ENCODE measurements at regions of chr4 and their contacts with region 1.

Region 1: DNA sequence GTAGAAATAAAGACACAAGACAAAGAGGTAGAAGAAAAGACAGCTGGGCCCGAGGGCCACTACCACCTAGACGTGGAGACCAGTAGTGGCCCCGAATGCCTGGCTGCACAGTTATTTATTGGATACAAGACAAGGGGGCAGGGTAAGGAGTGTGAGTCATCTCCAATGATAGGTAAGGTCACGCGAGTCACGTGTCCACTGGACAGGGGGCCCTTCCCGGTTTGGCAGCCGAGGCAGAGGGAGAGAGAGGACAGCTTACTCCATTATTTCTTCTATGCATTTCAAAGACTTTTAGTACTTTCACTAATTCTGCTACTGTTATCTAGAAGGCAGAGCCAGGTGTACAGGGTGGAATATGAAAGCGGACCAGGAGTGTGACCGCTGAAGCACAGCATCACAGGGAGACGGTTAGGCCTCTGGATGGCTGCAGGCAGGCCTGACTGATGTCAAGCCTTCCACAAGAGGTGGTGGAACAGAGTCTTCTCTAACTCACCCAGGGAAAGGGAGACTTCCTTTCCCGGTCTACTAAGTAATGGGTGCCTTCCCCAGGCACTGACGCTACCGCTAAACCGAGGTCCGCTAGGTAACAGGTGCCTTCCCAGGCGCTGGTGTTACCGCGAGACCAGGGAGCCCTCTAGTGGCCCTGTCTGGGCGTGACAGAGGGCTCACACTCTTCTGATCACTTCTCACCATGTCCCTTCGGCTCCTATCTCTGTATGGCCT is 44.9 kb downstream of the ZBTB49 start:
- DNase-seq: peak; percentile 30
- ATAC-seq: peak; percentile 79
- H3K4me3 ChIP-seq: no peak overlapping the region
- H3K27ac ChIP-seq: no peak overlapping the region
- H3K4me1 ChIP-seq: no peaks in the 10 kb centered on the region
- H3K27me3 ChIP-seq: peaks cover 15% of the 10 kb centered on the region
- CTCF ChIP-seq: peak; percentile 73
- POLR2A ChIP-seq: no peak
- RAD21 ChIP-seq: peak; percentile 75

Region 2: DNA sequence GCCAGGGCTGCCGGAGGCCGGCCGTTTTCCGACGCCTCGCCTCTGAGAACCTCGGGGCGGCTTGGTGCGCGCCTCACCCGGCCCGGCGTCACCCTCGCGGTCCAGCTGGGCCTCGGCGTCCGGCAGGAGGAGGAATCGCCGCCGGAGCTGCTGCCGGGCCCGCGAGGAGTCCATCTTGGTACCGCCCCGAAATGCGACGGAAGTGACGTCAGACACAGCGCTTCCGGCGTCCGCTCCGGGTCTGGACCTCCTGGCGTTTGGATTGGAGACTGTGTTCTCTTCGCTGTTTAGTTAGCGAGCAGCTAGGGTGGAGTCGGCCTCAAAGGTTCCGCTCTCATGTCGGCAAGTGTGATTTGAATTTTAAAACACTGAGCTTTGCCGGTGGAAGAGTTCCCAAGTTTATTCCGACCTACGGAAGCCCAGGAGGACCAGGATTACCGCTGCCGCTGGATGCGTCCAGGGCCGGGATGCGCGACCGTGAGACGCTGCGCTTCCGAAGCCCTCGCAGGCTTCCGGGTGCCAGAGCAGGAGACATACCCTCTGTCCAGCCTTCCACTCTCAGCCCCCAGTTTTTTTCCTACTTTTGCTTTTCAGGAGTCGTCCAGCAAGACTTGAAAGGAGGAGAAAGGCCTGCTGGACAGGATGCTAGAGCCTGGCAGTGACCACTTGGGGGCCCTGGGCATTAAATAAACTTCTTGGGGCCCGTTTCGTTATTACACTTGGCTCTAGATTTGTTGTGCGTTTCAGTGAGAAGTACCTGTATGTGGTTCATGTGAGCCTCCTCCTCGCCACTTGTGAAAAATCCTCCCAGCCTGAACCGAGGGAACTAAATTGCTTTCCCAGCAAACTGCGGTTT is 86.7 kb before region 1 on chr4 and contains the start of gene TMEM128:
- CTCF ChIA-PET with region 1: interaction called, 3 read pairs
- POLR2A ChIA-PET with region 1: no interaction called
- dilution Hi-C with region 1: no loop called
- in situ Hi-C with region 1: loop called (anchors 5 kb)
- intact Hi-C with region 1: loop called (anchors 1 kb)
- DNase-seq: peak; percentile 93
- ATAC-seq: peak; percentile 95
- H3K4me3 ChIP-seq: peak within 1 kb of the TSS; percentile 90
- H3K27ac ChIP-seq: peak within 1 kb of the TSS; percentile 96
- H3K4me1 ChIP-seq: peaks cover 2% of the 10 kb centered on the region; the same call in 1 of the 2 replicates
- H3K27me3 ChIP-seq: no peaks in the 10 kb centered on the region
- CTCF ChIP-seq: 0 out of 2 replicates have a peak, but pooled peaks have one; percentile 7
- POLR2A ChIP-seq: peak; percentile 92
- RAD21 ChIP-seq: no peak
- total RNA-seq, gene TMEM128: 21.9 and 27.2 TPM in 2 replicates

Region 3: GRCh38 chr4:4260253-4260652 is 74.7 kb before region 1 on chr4:
- CTCF ChIA-PET with region 1: interaction called, 19 read pairs
- POLR2A ChIA-PET with region 1: no interaction called
- dilution Hi-C with region 1: no loop called
- in situ Hi-C with region 1: no loop called
- intact Hi-C with region 1: loop called (anchors 1 kb)
- DNase-seq: peak; percentile 63
- ATAC-seq: peak; percentile 94
- H3K4me3 ChIP-seq: no peak overlapping the region
- H3K27ac ChIP-seq: no peak overlapping the region
- H3K4me1 ChIP-seq: peaks cover 1% of the 10 kb centered on the region; the same call in 1 of the 2 replicates
- H3K27me3 ChIP-seq: peaks cover 16% of the 10 kb centered on the region
- CTCF ChIP-seq: peak; percentile 59
- POLR2A ChIP-seq: no peak
- RAD21 ChIP-seq: peak; percentile 60

Region 4: GRCh38 chr4:4289941-4290850 is 44.8 kb before region 1 on chr4 and contains the starts of genes LYAR and ZBTB49:
- CTCF ChIA-PET with region 1: no interaction called
- POLR2A ChIA-PET with region 1: no interaction called
- dilution Hi-C with region 1: no loop called
- in situ Hi-C with region 1: no loop called
- intact Hi-C with region 1: loop called (anchors 5 kb)
- DNase-seq: peak; percentile 84
- ATAC-seq: peak; percentile 95
- H3K4me3 ChIP-seq: peak within 1 kb of the TSS; percentile 89
- H3K27ac ChIP-seq: peak within 1 kb of the TSS; percentile 54
- H3K4me1 ChIP-seq: peaks cover 6% of the 10 kb centered on the region
- H3K27me3 ChIP-seq: no peaks in the 10 kb centered on the region
- CTCF ChIP-seq: no peak
- POLR2A ChIP-seq: no peak
- RAD21 ChIP-seq: no peak
- total RNA-seq, gene LYAR: 5.4 and 13.9 TPM in 2 replicates
- total RNA-seq, gene ZBTB49: 4.2 and 4.8 TPM in 2 replicates

Measured in IMR-90 (cell line).